ENCODE measurements at regions of chr18 and their contacts with region 1.

Region 1: GRCh38 chr18:712401-713134 is at the start of gene ENOSF1:
- DNase-seq: peak; percentile 92
- H3K4me3 Mint-ChIP-seq: peak within 1 kb of the TSS; percentile 78
- H3K27ac Mint-ChIP-seq: peak within 1 kb of the TSS; percentile 75
- H3K4me1 Mint-ChIP-seq: peaks cover 45% of the 10 kb centered on the region
- H3K27me3 Mint-ChIP-seq: no peaks in the 10 kb centered on the region
- total RNA-seq, gene ENOSF1: 61.3 to 66.1 TPM

Region 2: DNA sequence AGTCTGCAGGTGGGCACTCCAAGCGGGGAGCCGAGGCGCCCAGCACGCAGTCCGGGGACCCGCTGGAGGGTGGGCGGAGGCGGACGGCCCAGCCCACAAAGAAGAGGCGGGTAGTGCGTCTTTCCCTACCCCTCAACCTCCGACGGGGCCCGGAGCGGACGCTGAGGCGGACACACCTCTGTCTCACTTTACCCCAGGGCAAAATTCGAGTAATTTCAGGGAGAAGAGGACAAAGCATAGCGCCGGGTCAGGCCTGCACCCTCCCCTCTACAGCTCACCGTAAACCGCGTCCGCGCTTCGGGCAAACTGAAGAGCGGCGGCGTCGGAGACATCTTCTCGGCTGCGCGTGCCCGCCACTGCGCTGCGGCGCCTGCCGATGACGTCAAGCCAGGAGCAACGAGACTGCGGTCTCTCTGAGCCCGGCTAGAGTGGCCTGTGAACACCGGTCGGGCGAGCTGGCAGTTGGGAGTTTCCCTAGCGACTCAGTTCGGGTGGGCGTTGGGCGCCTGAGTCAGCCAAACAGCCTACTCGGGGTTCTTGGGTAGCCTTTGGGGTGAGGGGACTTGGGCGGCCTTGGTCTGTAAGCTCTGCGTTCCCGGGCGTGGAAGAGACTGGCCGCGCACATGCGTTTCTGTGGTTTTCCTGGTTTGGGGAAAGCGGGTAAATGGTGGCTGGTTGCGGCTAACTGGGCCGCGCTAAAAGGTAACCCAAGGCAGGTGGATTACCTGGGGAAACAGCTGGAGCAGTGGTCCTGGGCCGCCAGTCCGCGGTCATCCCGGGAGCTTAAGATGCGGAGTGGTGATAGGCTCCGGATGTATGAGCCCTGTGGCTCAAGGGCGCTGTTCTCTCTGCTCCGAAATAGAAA is 444.6 kb before region 1 on chr18 and contains the start of gene THOC1:
- CTCF ChIA-PET with region 1: no interaction called
- intact Hi-C with region 1: loop called (anchors 1 kb)
- DNase-seq: peak; percentile 97
- H3K4me3 Mint-ChIP-seq: peak within 1 kb of the TSS; percentile 95
- H3K27ac Mint-ChIP-seq: peak within 1 kb of the TSS; percentile 99
- H3K4me1 Mint-ChIP-seq: peaks cover 39% of the 10 kb centered on the region
- H3K27me3 Mint-ChIP-seq: no peaks in the 10 kb centered on the region
- total RNA-seq, gene THOC1: 63.5 to 66.2 TPM

Region 3: GRCh38 chr18:500659-501405 is 211.7 kb before region 1 on chr18 and contains the start of gene COLEC12:
- CTCF ChIA-PET with region 1: no interaction called
- intact Hi-C with region 1: no loop called
- DNase-seq: no peak
- H3K4me3 Mint-ChIP-seq: peak within 1 kb of the TSS; percentile 32
- H3K27ac Mint-ChIP-seq: no peak within 1 kb of the TSS
- H3K4me1 Mint-ChIP-seq: peaks cover 9% of the 10 kb centered on the region
- H3K27me3 Mint-ChIP-seq: peaks cover 37% of the 10 kb centered on the region
- total RNA-seq, gene COLEC12: not detected

Region 4: DNA sequence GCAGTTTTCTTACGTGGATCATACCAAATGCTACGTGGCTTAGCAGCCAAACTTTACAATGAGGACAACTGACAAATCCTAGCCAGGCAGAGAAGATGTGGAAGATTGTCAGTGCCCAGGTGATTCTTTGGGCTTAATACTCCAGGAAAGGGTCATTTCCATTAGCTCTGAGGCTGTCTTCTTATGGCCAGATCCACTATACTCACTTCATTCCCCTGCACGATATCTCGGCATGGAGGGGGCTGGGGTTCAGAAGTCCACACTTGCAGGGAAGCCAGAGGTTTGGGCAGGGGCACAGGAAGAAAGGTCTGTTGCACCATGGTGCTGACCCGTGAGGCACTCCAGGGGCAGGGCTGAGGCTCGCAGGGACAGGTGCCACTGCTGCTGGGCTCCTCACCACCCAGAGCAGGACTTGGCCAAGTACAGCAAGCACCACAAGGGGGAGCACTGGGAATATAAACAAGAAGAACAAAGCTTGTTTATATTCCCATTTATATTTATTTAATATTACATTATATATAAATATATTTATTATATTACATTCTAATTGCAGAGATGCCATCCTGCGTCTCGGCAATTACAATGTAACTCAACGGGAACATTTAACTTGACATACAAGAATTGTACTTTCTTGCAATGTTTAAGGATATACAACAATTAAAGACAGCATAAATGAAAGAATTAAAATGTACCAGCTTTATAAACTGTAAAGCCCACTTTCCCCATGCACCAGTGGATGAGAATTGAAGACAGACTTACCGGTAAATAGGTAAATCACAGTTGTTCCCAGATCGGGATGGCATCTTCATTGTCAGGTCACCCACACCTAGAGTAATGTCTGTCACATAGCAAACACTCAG is 88.6 kb before region 1 on chr18:
- CTCF ChIA-PET with region 1: interaction called, 8 read pairs
- intact Hi-C with region 1: loop called (anchors 2 kb)
- DNase-seq: peak; percentile 81
- H3K4me3 Mint-ChIP-seq: no peak overlapping the region
- H3K27ac Mint-ChIP-seq: no peak overlapping the region
- H3K4me1 Mint-ChIP-seq: no peaks in the 10 kb centered on the region
- H3K27me3 Mint-ChIP-seq: no peaks in the 10 kb centered on the region

Region 5: GRCh38 chr18:681985-682384 is 30.6 kb before region 1 on chr18:
- CTCF ChIA-PET with region 1: interaction called, 11 read pairs
- intact Hi-C with region 1: no loop called
- DNase-seq: peak; percentile 77
- H3K4me3 Mint-ChIP-seq: no peak overlapping the region
- H3K27ac Mint-ChIP-seq: peak overlapping the region; percentile 73
- H3K4me1 Mint-ChIP-seq: peaks cover 17% of the 10 kb centered on the region
- H3K27me3 Mint-ChIP-seq: no peaks in the 10 kb centered on the region

Region 6: GRCh38 chr18:731185-731584 is 18.6 kb after region 1 on chr18:
- CTCF ChIA-PET with region 1: no interaction called
- intact Hi-C with region 1: loop called (anchors 1 kb)
- DNase-seq: no peak
- H3K4me3 Mint-ChIP-seq: no peak overlapping the region
- H3K27ac Mint-ChIP-seq: no peak overlapping the region
- H3K4me1 Mint-ChIP-seq: peaks cover 2% of the 10 kb centered on the region
- H3K27me3 Mint-ChIP-seq: no peaks in the 10 kb centered on the region

Region 7: DNA sequence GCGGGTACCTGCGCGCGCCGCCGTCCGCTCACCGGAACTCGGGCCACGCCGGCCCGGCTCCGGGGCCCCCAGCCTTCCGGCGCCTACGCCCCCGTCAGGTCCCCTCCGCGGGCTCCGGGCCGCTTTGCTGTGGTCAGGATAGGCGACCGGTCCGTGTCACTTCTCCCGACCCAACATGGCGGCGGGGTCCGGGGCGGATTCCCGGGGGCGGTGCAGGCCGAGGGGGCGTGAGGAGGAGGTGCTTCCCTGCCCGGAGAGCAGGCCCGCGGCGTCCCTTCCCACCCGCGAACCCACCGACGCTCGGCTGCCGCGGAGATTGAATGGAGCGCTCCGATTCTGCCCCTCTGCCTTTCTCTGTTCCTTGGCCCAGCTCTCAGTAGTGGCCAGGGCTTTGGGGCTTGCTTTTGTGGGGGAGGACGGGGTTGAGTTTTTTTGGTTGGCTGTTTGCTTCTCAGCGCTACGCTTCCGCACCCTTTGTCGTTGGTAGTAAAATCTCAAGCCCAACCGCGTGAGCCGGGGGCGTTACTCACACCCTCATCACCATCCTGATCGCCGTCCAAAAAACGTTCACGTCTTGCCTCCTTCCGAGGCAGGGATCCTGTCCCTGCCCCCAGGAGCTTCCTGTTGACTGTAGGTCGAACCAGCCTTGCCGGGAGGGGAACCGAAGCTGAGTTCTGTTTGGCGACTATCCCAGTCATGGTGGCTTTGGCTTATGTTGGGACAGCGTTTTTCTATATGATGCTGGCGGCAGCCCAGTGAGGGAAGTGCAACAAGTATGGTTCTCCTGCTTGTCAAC is 100.0 kb after region 1 on chr18:
- CTCF ChIA-PET with region 1: interaction called, 17 read pairs
- intact Hi-C with region 1: loop called (anchors 1 kb)
- DNase-seq: peak; percentile 82
- H3K4me3 Mint-ChIP-seq: peak overlapping the region; percentile 95
- H3K27ac Mint-ChIP-seq: peak overlapping the region; percentile 99
- H3K4me1 Mint-ChIP-seq: peaks cover 54% of the 10 kb centered on the region
- H3K27me3 Mint-ChIP-seq: no peaks in the 10 kb centered on the region

Region 8: DNA sequence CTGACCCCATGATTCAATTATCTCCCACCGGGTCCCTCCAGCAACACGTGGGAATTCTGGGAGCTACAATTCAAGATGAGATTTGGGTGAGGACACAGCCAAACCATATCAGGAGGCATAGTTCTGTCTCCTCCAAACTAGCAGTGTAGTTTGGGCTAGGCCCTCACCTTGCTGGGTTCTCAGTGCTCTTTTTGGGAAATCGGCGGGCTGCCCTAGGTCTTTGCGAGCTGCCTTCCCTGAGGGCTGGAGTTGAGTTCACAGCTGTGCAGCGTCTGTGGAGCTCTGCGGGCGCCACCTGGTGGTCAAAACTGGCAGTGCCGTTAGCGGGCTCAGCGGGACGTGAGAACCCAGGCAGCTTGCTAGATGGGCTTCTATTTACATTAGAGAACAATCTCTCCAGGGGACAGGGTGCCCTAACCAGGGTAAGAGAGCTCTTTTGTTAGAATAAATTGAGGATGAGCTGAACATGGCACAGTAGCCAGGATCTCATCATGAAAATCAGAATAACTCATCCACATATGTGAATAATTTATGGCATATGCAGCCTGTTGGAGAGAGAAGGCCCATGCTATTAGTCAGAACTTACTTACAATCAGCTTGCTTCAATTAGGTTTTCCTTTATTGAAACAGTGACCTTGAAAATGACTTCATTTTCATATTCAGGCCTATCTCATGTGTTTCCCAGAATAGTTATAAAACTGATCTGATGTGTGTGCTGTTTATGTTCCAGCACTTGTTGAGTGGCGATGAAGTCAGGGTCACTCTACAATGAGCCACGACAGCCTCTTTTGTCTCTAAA is 126.9 kb after region 1 on chr18:
- CTCF ChIA-PET with region 1: interaction called, 14 read pairs
- intact Hi-C with region 1: loop called (anchors 1 kb)
- DNase-seq: peak; percentile 93
- H3K4me3 Mint-ChIP-seq: no peak overlapping the region
- H3K27ac Mint-ChIP-seq: no peak overlapping the region
- H3K4me1 Mint-ChIP-seq: peaks cover 8% of the 10 kb centered on the region
- H3K27me3 Mint-ChIP-seq: no peaks in the 10 kb centered on the region